Activated B cell treated with CpG ODN at 0.5 μM for 24 hours (primary cell): ENCODE measurements at regions of chr9 and their contacts with region 1.

Region 1: DNA sequence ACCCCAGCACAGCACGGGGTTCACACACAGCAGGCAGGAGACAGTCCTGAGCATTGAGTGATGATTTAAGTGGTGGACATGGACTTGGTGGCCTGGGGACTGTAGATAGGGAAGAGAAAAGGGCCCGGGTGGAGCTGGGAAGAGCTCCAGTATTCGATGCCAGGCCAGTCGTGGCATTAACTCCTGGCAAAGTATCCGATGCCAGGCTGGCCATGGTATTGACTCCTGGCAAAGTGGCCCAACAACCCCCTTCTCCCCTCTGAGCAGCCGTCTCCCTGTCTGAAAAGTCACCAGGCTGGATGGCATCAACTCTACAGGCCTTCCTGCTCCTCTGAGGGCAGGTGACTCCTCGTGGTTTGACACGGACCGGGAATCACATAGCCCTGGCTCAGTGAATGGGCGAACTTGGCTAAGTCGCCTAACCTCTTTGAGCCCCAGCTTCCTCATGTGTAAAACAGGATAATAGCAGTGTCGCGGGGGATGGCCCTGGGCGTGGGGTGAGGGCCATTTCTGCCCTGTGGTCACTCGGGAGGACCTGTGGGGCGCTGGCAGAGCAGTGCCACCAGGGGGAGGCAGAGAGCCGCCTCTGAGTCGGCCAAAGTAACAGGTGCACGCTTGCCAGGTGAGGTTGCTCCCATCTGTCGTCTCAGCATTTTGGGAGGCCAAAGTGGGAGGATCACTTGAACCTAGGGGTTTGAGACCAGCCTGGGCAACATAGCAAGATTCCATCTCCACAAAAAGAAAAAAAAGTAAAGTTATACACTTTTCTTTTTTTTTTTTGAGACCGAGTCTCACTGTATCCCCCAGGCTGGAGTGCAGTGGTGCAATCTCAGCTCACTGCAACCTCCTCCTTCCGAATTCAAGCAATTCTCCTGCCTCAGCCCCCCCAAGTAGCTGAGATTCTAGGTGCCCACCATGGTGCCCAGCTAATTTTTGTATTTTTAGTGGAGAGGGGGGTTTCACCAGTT is 5.7 kb upstream of the SEC16A start:
- DNase-seq: peak; percentile 74
- ATAC-seq: peak; percentile 40
- H3K4me3 Mint-ChIP-seq: no peak overlapping the region
- H3K27ac Mint-ChIP-seq: no peak overlapping the region
- H3K4me1 Mint-ChIP-seq: peaks cover 8% of the 10 kb centered on the region
- H3K27me3 Mint-ChIP-seq: no peaks in the 10 kb centered on the region
- CTCF ChIP-seq: peak; percentile 70

Region 2: DNA sequence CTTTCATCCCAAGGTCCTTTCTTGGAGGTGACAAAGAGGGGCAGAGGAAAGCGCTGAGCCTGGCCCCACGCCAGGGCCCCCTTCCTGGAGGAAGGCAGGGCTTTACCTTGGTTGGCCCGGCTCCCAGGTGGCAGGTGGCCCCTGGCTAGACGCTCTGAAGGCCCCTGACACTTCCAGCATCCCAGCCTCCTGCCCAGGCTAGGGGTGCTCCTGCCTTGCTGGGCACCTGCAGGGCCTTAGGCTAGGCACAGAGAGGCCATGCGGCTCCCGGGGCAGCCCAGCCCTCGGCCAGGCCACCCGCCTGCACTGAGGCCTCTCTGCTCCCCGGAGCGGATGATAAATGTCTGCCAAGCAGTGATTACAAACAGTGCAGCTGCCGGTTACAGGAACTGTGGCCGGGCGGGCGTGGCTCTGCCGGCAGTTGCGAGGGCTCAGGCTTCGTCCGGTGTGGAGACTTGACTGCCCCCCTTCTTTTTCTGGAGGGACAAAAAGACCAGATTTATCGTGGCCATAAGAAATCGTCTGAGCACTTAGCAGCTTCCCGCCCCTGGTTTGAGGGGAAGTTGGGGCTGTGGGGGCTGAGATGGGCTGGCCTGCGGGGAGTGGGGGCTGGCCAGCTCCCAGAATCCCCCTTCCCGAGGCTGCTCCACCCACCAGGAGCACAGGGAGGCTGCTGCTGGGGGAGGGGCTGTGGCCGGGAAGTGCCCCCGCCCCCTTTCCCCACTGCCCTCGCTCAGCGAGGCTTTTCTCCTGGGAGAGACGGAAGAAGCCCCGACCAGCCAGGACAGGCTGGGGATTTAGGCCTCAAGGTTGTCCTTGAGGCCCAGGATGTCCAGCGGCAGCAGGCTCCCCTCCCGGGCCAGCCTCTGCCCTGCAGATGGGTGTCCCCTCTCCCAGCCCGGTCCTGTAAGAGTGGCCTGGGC is 495.8 kb before region 1 on chr9:
- CTCF ChIA-PET with region 1: no interaction called
- POLR2A ChIA-PET with region 1: no interaction called
- intact Hi-C with region 1: no loop called
- DNase-seq: peak; percentile 38
- ATAC-seq: peak; percentile 63
- H3K4me3 Mint-ChIP-seq: peak overlapping the region; percentile 56
- H3K27ac Mint-ChIP-seq: no peak overlapping the region
- H3K4me1 Mint-ChIP-seq: peaks cover 20% of the 10 kb centered on the region
- H3K27me3 Mint-ChIP-seq: no peaks in the 10 kb centered on the region
- CTCF ChIP-seq: no peak

Region 3: GRCh38 chr9:136429683-136430590 is 58.6 kb before region 1 on chr9:
- CTCF ChIA-PET with region 1: no interaction called
- POLR2A ChIA-PET with region 1: no interaction called
- intact Hi-C with region 1: no loop called
- DNase-seq: no peak
- ATAC-seq: no peak
- H3K4me3 Mint-ChIP-seq: no peak overlapping the region
- H3K27ac Mint-ChIP-seq: no peak overlapping the region
- H3K4me1 Mint-ChIP-seq: no peaks in the 10 kb centered on the region
- H3K27me3 Mint-ChIP-seq: no peaks in the 10 kb centered on the region
- CTCF ChIP-seq: no peak

Region 4: GRCh38 chr9:136625101-136626060 is 136.8 kb after region 1 on chr9:
- CTCF ChIA-PET with region 1: interaction called, 44 read pairs
- POLR2A ChIA-PET with region 1: interaction called, 4 read pairs
- intact Hi-C with region 1: no loop called
- DNase-seq: no peak
- ATAC-seq: no peak
- H3K4me3 Mint-ChIP-seq: no peak overlapping the region
- H3K27ac Mint-ChIP-seq: no peak overlapping the region
- H3K4me1 Mint-ChIP-seq: peaks cover 4% of the 10 kb centered on the region
- H3K27me3 Mint-ChIP-seq: peaks cover 18% of the 10 kb centered on the region
- CTCF ChIP-seq: no peak

Region 5: GRCh38 chr9:136631038-136632000 is 142.8 kb after region 1 on chr9:
- CTCF ChIA-PET with region 1: interaction called, 44 read pairs
- POLR2A ChIA-PET with region 1: interaction called, 4 read pairs
- intact Hi-C with region 1: loop called (anchors 1 kb)
- DNase-seq: peak; percentile 74
- ATAC-seq: peak; percentile 93
- H3K4me3 Mint-ChIP-seq: no peak overlapping the region
- H3K27ac Mint-ChIP-seq: no peak overlapping the region
- H3K4me1 Mint-ChIP-seq: no peaks in the 10 kb centered on the region
- H3K27me3 Mint-ChIP-seq: peaks cover 14% of the 10 kb centered on the region
- CTCF ChIP-seq: no peak

Region 6: GRCh38 chr9:137007108-137007815 is 518.7 kb after region 1 on chr9:
- CTCF ChIA-PET with region 1: no interaction called
- POLR2A ChIA-PET with region 1: no interaction called
- intact Hi-C with region 1: no loop called
- DNase-seq: no peak
- ATAC-seq: no peak
- H3K4me3 Mint-ChIP-seq: no peak overlapping the region
- H3K27ac Mint-ChIP-seq: no peak overlapping the region
- H3K4me1 Mint-ChIP-seq: no peaks in the 10 kb centered on the region
- H3K27me3 Mint-ChIP-seq: no peaks in the 10 kb centered on the region
- CTCF ChIP-seq: no peak